ENCODE measurements at regions of chr12 and their contacts with region 1.

Region 1: DNA sequence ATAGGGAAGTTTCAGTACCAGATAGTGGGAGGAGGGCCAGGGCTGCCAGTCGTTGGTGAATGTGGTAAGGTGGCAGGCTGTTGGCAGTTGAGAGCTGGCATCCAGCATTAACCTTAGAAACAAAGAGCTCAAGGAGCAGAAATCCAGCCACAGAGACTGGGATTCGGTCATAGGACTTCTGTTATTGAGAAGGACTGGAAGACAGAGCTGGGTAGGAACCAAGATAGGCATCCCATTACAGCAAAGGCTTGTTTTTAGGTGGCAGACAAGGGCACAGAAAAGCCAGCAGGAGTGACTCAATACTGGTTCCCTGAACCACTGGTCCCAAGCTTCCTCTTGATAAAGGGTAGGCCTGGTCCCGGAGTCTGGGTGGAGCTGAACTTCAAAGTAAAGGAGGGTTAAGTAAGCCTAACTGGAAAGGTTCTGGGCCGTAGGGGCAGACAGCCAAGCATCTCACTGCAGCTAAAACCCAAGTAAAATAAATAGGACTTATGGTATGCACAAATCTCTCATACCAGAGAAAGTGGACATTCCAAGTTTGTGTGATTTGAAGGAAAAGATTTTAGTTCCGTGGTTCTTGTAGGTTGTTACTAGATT is 147.9 kb downstream of the ETV6 start:
- DNase-seq: peak; percentile 40
- H3K4me3 Mint-ChIP-seq: no peak overlapping the region
- H3K27ac Mint-ChIP-seq: peak overlapping the region; percentile 66
- H3K4me1 Mint-ChIP-seq: peaks cover 47% of the 10 kb centered on the region
- H3K27me3 Mint-ChIP-seq: no peaks in the 10 kb centered on the region
- CTCF ChIP-seq: no peak

Region 2: GRCh38 chr12:11785712-11786111 is 11.7 kb before region 1 on chr12:
- CTCF ChIA-PET with region 1: no interaction called
- POLR2A ChIA-PET with region 1: interaction called, 30 read pairs
- intact Hi-C with region 1: no loop called
- DNase-seq: peak; percentile 97
- H3K4me3 Mint-ChIP-seq: no peak overlapping the region
- H3K27ac Mint-ChIP-seq: peak overlapping the region; percentile 34
- H3K4me1 Mint-ChIP-seq: peaks cover 18% of the 10 kb centered on the region
- H3K27me3 Mint-ChIP-seq: no peaks in the 10 kb centered on the region
- CTCF ChIP-seq: no peak